ENCODE measurements at regions of chr11 and their contacts with region 1.

Region 1: GRCh38 chr11:59668950-59669610 is at the start of gene PATL1:
- DNase-seq: peak; percentile 99
- H3K4me3 Mint-ChIP-seq: peak within 1 kb of the TSS; percentile 87
- H3K27ac Mint-ChIP-seq: peak within 1 kb of the TSS; percentile 91
- H3K4me1 Mint-ChIP-seq: peaks cover 37% of the 10 kb centered on the region
- H3K27me3 Mint-ChIP-seq: no peaks in the 10 kb centered on the region
- total RNA-seq, gene PATL1: 56.7 to 56.8 TPM

Region 2: DNA sequence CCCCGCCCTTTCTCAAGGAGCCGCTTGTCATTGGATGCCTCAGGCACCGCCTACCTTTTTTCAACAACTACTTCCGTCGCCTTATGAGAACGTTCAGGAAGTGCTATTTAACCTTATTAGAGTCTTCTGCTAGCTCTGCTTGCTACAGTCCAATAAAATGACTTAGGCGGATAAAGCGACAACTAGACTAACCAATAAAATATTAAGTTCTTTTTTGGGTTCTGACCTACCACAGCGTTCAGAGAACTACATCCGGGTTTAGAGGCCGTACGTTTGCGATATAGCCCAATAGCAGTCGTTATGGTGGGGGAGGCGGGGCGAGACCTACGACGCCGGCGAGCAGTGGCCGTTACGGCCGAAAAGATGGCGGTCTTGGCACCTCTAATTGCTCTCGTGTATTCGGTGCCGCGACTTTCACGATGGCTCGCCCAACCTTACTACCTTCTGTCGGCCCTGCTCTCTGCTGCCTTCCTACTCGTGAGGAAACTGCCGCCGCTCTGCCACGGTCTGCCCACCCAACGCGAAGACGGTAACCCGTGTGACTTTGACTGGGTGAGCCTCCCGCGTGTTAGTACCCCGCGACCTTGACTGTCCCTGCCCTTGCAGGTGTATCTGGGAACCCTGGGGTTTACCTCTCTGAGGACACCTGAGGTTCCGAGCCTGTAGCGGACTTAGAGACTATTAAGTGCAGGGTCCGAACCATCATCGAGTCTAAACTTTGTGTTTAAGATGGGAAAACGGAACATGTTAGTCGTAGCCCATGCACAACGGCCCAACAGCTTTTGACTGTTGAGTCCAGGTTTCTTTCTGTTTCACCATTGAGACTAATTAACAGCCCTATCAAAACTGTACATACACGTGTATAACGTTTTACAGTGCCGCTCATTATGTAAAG is 1956.6 kb before region 1 on chr11 and contains the start of gene TMX2:
- CTCF ChIA-PET with region 1: no interaction called
- intact Hi-C with region 1: loop called (anchors 5 kb)
- DNase-seq: peak; percentile 95
- H3K4me3 Mint-ChIP-seq: peak within 1 kb of the TSS; percentile 99
- H3K27ac Mint-ChIP-seq: peak within 1 kb of the TSS; percentile 92
- H3K4me1 Mint-ChIP-seq: peaks cover 50% of the 10 kb centered on the region
- H3K27me3 Mint-ChIP-seq: no peaks in the 10 kb centered on the region
- total RNA-seq, gene TMX2: 49.8 to 54.7 TPM

Region 3: DNA sequence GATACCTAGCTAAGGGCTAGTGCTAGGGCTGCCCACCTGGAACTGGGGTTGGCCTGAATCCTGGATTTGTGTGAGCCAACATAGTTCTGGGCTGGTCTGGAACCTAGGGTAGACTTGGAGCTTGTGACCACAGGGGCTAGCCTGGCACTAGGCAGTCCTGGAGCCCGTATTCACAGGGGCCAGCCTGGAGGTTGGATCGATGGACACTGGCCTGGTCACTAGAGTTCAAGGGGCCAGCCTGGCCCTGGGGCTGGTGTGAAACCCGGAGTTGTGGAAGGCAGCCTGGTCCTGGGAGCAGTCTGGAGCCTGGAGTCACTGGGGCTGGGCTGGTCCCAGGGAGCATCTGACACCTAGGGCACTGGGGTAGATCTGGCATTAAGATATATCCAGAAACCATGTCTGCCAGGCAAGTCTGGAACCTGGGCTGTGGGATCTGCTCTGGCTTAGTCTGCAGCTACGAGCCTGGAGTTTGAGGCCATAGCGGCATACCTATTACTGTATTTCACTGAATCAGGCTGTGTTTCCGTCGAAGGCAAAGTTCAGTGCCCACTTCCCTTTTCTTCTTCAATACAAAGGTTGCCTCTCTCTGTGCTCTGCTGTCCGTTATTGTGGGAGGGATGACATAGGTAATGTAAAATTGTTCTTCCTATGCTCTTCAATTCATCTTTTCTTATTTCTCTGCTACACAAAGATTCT is 592.1 kb before region 1 on chr11:
- CTCF ChIA-PET with region 1: no interaction called
- intact Hi-C with region 1: no loop called
- DNase-seq: no peak
- H3K4me3 Mint-ChIP-seq: no peak overlapping the region
- H3K27ac Mint-ChIP-seq: no peak overlapping the region
- H3K4me1 Mint-ChIP-seq: peaks cover 10% of the 10 kb centered on the region
- H3K27me3 Mint-ChIP-seq: peaks cover 26% of the 10 kb centered on the region

Region 4: DNA sequence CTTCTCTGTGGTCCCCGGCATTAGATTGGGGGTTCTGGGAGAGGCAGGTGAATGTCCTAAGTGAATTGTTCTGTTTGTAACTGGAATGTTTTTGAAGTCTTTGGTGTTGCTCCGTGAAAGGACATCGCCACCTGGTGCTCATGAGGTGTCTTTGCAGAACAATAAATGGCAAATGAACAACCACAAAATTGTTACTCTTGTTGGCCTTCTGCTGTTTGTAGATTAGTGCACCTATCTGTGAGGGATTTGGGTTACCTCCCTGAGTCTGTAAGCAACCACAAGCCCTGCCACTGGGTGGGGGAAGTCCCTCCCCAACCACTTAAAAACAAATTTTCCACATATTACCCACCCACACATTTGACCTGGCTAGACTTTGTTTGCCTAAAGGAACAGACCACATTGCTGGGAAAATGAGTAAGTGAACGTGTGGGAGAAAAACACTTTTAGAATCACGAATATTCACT is 461.1 kb before region 1 on chr11:
- CTCF ChIA-PET with region 1: no interaction called
- intact Hi-C with region 1: loop called (anchors 10 kb)
- DNase-seq: peak; percentile 53
- H3K4me3 Mint-ChIP-seq: no peak overlapping the region
- H3K27ac Mint-ChIP-seq: no peak overlapping the region
- H3K4me1 Mint-ChIP-seq: peaks cover 35% of the 10 kb centered on the region
- H3K27me3 Mint-ChIP-seq: peaks cover 26% of the 10 kb centered on the region

Region 5: DNA sequence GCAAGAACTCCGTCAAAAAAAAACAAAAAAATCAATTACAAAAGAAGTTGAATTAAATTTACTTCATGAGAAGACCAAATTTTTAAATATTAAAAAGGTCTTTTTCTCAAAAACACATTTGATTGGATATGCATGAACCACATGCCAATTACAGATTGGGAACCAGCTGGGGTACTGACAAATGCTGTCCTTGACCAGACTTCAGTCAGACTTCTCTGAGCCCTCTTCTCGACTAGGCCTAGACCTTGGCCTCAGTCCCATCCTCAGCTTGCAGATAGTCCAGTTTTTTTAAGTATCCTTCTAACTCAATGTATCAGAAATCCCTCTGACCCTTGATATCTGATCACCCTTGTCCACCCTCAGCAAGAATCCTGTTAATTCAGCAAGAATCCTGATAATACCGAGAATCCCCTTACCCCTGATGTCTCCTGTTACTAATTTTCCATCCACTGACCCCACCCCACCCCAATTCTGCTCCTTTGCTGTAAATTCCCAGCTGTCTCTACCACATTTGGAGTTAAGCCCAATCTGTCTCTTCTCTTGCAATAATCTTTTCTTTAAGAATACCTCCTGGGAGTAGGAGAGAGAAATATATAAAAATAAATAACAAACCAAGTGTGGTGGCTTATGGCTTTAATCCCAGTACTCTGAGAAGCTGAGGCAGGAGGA is 126.8 kb before region 1 on chr11:
- CTCF ChIA-PET with region 1: interaction called, 4 read pairs
- intact Hi-C with region 1: loop called (anchors 1 kb)
- DNase-seq: no peak
- H3K4me3 Mint-ChIP-seq: no peak overlapping the region
- H3K27ac Mint-ChIP-seq: no peak overlapping the region
- H3K4me1 Mint-ChIP-seq: peaks cover 11% of the 10 kb centered on the region
- H3K27me3 Mint-ChIP-seq: no peaks in the 10 kb centered on the region

Region 6: DNA sequence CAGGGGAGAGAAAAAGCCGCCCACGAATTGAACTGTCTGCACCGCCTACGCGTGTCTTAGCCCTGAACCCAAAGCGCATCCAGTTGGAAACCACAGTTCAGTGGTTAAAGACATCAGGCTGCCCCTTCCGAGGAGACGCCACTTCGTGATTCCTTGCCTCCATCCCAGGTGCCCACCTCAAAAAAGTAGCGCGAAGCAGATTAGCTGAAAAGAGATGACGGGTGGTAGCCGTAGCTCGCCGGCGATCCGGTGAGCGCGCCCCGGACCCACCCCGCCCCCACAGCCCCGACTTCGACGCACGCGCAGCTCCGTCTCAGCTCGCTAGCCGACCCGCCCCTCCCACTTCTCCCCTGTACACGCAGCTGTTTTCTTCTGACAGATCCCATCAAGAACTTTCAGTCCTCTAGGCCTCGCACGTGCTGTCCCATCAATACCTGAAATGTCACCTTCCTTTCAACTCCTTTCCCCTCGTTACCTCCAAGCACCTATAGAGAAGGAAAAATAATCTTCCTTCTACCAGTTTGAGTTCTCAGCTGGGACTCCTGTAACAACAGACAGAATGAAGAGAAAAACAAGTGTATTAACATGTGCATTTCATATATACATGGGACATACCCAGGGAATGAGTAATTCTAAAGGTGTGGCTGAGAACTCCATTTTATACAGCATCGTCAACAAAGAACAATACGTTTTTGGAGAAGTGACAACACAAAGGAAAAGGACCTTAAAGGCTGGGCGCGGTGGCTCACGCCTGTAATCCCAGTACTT is 108.2 kb before region 1 on chr11:
- CTCF ChIA-PET with region 1: no interaction called
- intact Hi-C with region 1: loop called (anchors 1 kb)
- DNase-seq: peak; percentile 90
- H3K4me3 Mint-ChIP-seq: peak overlapping the region; percentile 93
- H3K27ac Mint-ChIP-seq: peak overlapping the region; percentile 97
- H3K4me1 Mint-ChIP-seq: peaks cover 47% of the 10 kb centered on the region
- H3K27me3 Mint-ChIP-seq: peaks cover 4% of the 10 kb centered on the region

Region 7: GRCh38 chr11:59572091-59572490 is 97.0 kb before region 1 on chr11:
- CTCF ChIA-PET with region 1: no interaction called
- intact Hi-C with region 1: no loop called
- DNase-seq: no peak
- H3K4me3 Mint-ChIP-seq: no peak overlapping the region
- H3K27ac Mint-ChIP-seq: no peak overlapping the region
- H3K4me1 Mint-ChIP-seq: no peaks in the 10 kb centered on the region
- H3K27me3 Mint-ChIP-seq: no peaks in the 10 kb centered on the region

Region 8: GRCh38 chr11:59802639-59803176 is 133.6 kb after region 1 on chr11:
- CTCF ChIA-PET with region 1: interaction called, 3 read pairs
- intact Hi-C with region 1: loop called (anchors 2 kb)
- DNase-seq: peak; percentile 53
- H3K4me3 Mint-ChIP-seq: no peak overlapping the region
- H3K27ac Mint-ChIP-seq: no peak overlapping the region
- H3K4me1 Mint-ChIP-seq: no peaks in the 10 kb centered on the region
- H3K27me3 Mint-ChIP-seq: no peaks in the 10 kb centered on the region